HEK293T (cell line): ENCODE measurements at regions of chr15 and their contacts with region 1.

Region 1: DNA sequence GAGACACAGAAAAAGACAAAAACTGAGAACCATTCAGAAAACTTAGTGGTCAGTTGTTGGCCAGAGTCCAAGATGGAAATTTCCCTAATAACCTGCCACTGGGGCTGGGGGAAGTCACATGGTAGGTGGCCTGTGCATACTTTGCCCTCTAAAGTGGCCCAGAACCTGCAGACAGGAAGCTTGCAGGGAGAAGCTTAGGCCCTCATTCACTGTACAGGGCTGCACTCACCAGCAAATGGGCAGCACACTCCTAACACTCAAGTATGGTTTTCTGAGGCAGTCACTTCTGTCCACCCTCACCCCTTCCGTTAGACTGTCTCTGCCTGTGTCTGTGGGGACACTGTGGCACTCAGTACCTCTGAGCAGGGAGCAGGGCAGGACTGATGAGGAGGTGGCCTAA is 14.5 kb upstream of the RNU6-1 start:
- DNase-seq: no peak

Region 2: GRCh38 chr15:67715170-67715569 is 139.2 kb before region 1 on chr15:
- CTCF ChIA-PET with region 1: no interaction called
- POLR2A ChIA-PET with region 1: no interaction called
- DNase-seq: peak; percentile 28

Region 3: GRCh38 chr15:68195336-68196112 is 341.2 kb after region 1 on chr15:
- CTCF ChIA-PET with region 1: interaction called, 12 read pairs
- POLR2A ChIA-PET with region 1: no interaction called
- DNase-seq: no peak